ENCODE measurements at regions of chr3 and their contacts with region 1.

Region 1: DNA sequence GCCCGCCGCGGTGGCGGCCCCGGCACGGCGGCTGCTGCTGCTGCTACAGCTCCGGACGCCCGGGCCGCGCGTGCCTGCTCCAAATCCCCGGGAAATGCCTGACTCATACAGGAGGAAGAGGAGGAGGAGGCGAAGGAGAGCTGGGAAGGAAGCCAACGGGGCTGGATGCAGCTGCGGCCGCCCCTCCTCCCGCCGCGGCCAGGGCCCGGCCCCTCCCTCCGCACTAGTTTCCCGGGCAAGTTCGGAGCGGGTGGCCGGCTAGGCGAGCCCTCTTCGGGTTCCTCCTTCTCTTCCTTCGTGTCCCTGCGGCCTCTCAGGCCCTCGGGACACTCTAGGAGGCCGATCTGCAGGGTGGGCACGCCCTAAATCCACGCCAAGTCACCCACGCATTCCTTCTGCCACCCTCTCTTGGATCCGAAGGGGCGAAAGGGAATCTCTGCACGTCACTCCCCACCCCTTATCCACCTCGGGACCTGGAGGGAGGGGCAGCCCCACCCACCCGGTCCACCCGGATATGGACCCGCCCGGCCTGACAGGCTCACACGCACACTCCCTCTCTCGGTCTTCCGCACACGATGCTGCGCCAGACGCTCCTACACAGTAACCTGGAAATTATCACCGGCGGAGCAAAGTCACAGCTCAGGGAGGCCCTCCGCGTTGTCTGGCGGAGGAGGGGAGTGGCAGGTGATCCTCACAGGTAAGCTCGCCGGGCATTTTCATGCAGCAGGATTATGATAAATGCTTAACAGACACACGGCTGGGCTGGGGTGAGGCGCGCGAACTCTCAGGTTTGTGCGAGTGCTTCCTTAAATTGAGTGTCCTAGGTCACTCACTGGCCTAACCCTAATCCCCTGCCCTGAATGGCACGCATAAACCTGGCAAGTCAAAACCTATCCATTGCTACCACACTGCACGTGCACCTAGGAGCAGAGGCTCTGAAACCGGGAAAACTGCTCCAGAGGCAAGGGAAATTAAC is at the starts of genes OSBPL10 and ZNF860:
- DNase-seq: peak; percentile 95
- H3K4me3 ChIP-seq: peak within 1 kb of the TSS; percentile 50 to 94 (median 57)
- H3K27ac ChIP-seq: peak within 1 kb of the TSS; percentile 71
- H3K4me1 ChIP-seq: peaks cover 17% of the 10 kb centered on the region
- H3K27me3 ChIP-seq: no peaks in the 10 kb centered on the region
- CTCF ChIP-seq: no peak
- POLR2A ChIP-seq: peak; percentile 12
- total RNA-seq, gene OSBPL10: 37.1 and 47.6 TPM in 2 replicates
- total RNA-seq, gene ZNF860: 0.73 and 1.0 TPM in 2 replicates

Region 2: DNA sequence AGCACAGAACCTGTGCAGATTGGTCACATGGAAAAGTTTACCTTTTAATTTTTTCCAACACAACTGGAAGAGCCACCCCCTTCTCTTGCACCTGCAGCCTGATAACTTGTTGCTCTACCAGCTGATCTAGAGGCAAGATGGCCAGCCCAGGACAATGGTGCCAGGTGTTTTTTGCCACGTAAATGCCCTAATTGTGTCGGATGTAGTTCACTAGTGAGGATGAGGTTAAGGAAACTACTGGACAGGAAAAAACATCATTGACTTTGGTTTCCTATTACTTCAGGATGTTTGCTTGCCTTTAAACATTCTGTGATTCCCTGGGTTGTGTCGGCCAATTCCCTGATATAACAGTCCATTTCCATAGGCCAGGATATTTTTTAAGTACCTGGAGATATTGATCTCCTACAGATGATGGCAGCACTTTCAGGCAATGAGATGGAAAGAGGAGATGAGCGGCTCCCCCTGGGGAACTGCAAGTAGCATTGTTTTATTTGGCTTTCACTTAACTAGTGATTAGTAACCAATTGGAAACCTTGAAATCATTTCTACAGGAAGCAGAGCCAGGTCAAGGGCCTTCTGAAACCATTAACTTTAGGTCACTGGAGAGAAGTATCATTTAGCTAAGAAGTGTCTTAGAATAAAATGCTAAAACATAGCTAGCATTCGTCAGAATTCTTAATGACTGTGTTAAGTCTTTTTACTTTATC is 73.0 kb before region 1 on chr3:
- CTCF ChIA-PET with region 1: interaction called, 3 read pairs
- POLR2A ChIA-PET with region 1: no interaction called
- dilution Hi-C with region 1: no loop called
- intact Hi-C with region 1: loop called (anchors 1 kb)
- DNase-seq: peak; percentile 74
- H3K4me3 ChIP-seq: no peak overlapping the region
- H3K27ac ChIP-seq: no peak overlapping the region
- H3K4me1 ChIP-seq: peaks cover 28% of the 10 kb centered on the region
- H3K27me3 ChIP-seq: no peaks in the 10 kb centered on the region
- CTCF ChIP-seq: peak in 1 of 2 donors; percentile 4
- POLR2A ChIP-seq: no peak

Region 3: GRCh38 chr3:31960793-31961431 is 20.6 kb before region 1 on chr3:
- CTCF ChIA-PET with region 1: no interaction called
- POLR2A ChIA-PET with region 1: no interaction called
- dilution Hi-C with region 1: no loop called
- intact Hi-C with region 1: loop called (anchors 2 kb)
- DNase-seq: no peak
- H3K4me3 ChIP-seq: no peak overlapping the region
- H3K27ac ChIP-seq: no peak overlapping the region
- H3K4me1 ChIP-seq: peaks cover 24% of the 10 kb centered on the region
- H3K27me3 ChIP-seq: no peaks in the 10 kb centered on the region
- CTCF ChIP-seq: no peak
- POLR2A ChIP-seq: no peak

Region 4: GRCh38 chr3:31968927-31969418 is 12.5 kb before region 1 on chr3:
- CTCF ChIA-PET with region 1: interaction called, 7 read pairs
- POLR2A ChIA-PET with region 1: interaction called, 3 read pairs
- dilution Hi-C with region 1: no loop called
- intact Hi-C with region 1: loop called (anchors 1 kb)
- DNase-seq: peak; percentile 57
- H3K4me3 ChIP-seq: peak overlapping the region in 1 of 3 experiments; percentile 24
- H3K27ac ChIP-seq: peak overlapping the region; percentile 62
- H3K4me1 ChIP-seq: peaks cover 37% of the 10 kb centered on the region
- H3K27me3 ChIP-seq: no peaks in the 10 kb centered on the region
- CTCF ChIP-seq: no peak
- POLR2A ChIP-seq: no peak

Region 5: GRCh38 chr3:32106280-32106928 is 124.9 kb after region 1 on chr3 and contains the start of gene GPD1L:
- CTCF ChIA-PET with region 1: no interaction called
- POLR2A ChIA-PET with region 1: no interaction called
- dilution Hi-C with region 1: no loop called
- intact Hi-C with region 1: loop called (anchors 1 kb)
- DNase-seq: peak; percentile 97
- H3K4me3 ChIP-seq: peak within 1 kb of the TSS; percentile 63 to 65 (median 63)
- H3K27ac ChIP-seq: no peak within 1 kb of the TSS
- H3K4me1 ChIP-seq: peaks cover 17% of the 10 kb centered on the region
- H3K27me3 ChIP-seq: no peaks in the 10 kb centered on the region
- CTCF ChIP-seq: no peak
- POLR2A ChIP-seq: peak; percentile 34
- total RNA-seq, gene GPD1L: 11.3 and 12.9 TPM in 2 replicates